ENCODE measurements at regions of chr1 and their contacts with region 1.

Region 1: GRCh38 chr1:200802865-200803512 is 64.3 kb downstream of the CAMSAP2 start:
- DNase-seq: peak; percentile 60 to 95 (median 81)

Region 2: DNA sequence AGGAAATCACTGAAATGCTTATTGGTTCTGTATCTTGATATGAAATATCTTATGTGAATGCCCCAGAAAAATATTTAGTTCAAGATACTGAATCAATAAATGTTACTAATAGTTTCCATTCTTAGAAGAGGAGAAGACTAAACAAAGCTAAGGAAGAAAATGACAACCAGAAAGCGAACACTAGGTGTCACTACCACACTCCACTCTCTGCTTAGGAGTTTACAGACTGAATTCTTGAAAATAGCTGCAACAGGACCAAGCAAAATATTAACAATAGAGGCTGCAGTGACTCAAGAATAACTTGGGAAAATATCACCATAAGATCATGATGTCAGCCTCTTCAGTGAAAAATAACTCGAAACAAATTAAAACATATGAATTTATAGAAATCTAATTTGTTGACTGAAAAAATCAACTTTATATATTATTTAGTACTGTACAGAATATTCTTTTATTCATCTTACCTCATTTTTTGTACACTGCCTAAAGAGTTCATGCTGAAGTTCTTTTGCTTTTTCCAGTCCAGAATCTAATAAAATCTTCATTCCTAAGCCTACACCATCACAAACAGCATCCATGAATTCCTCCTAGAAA is 244.0 kb before region 1 on chr1:
- intact Hi-C with region 1: loop called (anchors 5 kb)
- DNase-seq: no peak

Region 3: DNA sequence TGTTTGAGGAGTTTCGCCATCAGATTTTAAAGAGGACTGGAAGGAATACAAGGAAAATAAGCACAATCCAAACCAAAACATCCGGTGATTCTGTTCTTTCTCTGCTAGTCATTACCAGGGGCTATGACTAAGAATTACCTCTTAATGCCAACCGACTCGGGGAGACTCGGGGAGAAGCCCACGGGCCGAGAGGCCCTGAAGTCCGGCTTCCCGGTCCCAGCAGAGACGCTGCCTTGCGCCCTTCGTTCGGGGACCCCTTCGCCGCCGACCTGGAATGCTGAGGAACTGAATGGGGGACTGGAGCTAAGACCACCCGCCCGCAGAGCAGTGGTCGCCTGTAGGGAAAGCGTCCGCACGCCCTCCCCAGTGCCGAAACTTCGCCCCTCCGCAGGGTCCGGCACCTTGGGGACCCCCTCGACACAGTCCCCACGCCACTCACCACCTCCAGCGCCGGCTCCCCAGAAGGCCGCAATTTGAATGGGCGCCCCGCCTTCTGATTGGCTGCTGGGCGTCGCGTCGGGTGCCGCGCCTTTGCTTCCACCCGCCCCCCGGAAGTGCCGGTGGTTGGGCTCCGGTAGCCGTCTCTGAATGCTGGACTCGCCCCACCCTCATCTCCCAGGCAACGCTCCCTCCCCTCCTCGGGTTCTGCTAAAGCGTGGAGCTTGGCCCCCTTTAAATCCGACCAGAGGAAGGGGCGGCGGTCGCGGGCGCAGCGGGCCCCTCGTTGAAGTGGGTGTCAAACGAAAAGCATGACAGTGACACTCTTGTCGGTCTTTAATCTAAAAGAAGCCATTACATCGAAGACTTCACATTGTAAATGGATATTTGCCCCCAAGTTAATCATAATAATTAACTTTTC is 182.5 kb before region 1 on chr1 and contains the start of gene KIF14:
- intact Hi-C with region 1: loop called (anchors 1 kb)
- DNase-seq: peak; percentile 78 to 98 (median 87)

Region 4: GRCh38 chr1:200669314-200670241 is 133.4 kb before region 1 on chr1 and contains the start of gene DDX59:
- intact Hi-C with region 1: loop called (anchors 5 kb)
- DNase-seq: peak; percentile 87 to 99 (median 92)

Region 5: GRCh38 chr1:200738740-200739498 is 64.1 kb before region 1 on chr1 and contains the start of gene CAMSAP2:
- intact Hi-C with region 1: loop called (anchors 2 kb)
- DNase-seq: peak; percentile 79 to 98 (median 86)

Region 6: GRCh38 chr1:200959411-200959921 is 156.5 kb after region 1 on chr1:
- intact Hi-C with region 1: no loop called
- DNase-seq: no peak